MCF 10A (cell line): ENCODE measurements at regions of chr6 and their contacts with region 1.

Region 1: DNA sequence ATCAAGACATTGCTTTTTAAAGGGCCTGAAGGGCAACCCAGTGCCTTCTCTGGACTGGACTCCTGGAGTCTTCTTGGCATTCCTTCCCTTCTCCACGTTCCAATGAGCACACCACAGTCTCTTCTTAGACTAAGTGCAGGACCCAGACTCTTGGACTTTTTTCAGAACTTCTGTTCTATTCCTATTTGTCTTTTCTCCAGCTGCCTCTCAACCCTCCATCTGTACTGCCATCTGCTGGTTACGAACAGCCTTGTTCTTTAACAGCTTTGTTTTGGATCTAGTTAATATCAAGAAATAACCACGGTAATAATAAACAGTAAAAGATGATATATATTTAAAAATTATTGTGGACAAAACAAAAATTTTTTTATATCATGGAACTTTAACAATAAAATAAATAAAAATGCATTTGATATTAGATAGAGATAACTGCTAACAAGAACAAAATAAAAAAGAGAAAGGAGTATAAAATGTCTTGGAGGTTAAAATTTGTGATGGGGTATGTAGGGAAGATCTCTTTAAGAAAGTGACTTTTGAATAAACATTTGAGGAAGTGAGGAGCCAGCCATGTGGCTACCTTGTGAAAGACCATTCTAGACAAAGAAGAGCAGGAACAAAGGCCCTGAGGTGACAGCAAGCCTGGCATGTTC is 105.1 kb upstream of the HCRTR2 start:
- DNase-seq: peak; percentile 63
- H3K4me3 Mint-ChIP-seq: no peak overlapping the region
- H3K27ac Mint-ChIP-seq: no peak overlapping the region
- H3K4me1 Mint-ChIP-seq: no peaks in the 10 kb centered on the region
- H3K27me3 Mint-ChIP-seq: no peaks in the 10 kb centered on the region
- CTCF ChIP-seq: peak; percentile 65

Region 2: DNA sequence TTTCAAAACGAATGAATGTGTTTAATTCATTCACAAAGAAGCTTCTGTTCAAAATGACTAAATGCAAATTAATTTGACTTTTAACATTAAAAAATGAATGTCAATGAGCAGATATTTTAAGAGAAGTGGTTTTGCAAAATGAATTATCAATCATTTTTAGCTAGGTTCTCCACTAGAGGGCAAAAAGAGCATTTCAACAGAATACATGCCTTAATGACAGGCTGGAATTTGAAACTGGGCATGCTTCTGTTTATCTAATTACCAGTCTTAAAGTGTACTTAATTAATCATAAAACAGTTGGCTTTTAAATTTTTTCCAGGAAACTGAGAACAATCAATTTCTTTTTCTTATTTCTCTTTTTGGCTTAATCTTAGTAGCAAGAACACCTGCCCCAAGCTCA is 824.8 kb before region 1 on chr6:
- CTCF ChIA-PET with region 1: interaction called, 8 read pairs
- POLR2A ChIA-PET with region 1: no interaction called
- intact Hi-C with region 1: loop called (anchors 1 kb)
- DNase-seq: peak; percentile 40
- H3K4me3 Mint-ChIP-seq: no peak overlapping the region
- H3K27ac Mint-ChIP-seq: no peak overlapping the region
- H3K4me1 Mint-ChIP-seq: no peaks in the 10 kb centered on the region
- H3K27me3 Mint-ChIP-seq: no peaks in the 10 kb centered on the region
- CTCF ChIP-seq: peak; percentile 60

Region 3: DNA sequence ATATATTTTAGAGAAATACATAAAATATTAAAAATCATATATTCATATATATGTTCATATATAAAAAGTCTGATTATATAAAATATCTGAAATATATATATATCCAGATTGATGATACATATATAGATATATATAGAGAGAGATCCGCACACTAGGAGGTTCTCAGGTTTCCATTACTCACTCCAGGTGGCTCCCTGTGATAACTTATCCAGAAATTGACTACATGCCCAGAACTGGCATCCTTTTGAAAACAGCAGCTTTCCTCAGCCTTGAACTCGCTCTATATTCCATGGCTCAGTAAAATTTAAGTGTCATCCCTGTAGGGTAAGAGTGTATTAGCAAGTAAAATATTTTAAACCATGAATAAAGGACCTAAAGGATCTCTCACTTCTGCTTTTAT is 554.2 kb before region 1 on chr6:
- CTCF ChIA-PET with region 1: interaction called, 3 read pairs
- POLR2A ChIA-PET with region 1: no interaction called
- intact Hi-C with region 1: loop called (anchors 1 kb)
- DNase-seq: peak; percentile 45
- H3K4me3 Mint-ChIP-seq: no peak overlapping the region
- H3K27ac Mint-ChIP-seq: no peak overlapping the region
- H3K4me1 Mint-ChIP-seq: peaks cover 9% of the 10 kb centered on the region
- H3K27me3 Mint-ChIP-seq: no peaks in the 10 kb centered on the region
- CTCF ChIP-seq: no peak

Region 4: DNA sequence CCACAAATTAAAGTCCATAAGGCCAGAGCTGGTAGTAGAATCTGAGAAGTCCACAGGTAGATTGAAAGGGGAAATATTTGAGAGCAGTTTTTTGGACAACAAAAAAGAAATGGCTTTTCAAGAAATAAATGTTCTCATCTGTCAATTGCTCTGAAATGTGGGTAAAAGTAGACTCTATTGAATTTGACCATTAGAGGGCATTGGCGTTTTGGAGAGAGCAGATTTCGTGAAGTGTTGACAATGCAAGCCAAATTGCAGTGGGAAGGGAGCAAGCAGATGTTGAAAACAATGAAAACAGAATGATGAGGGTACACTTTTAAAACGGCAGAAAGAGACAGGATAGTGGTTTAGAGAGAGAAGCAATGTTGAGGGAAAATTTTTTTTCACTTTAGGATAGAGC is 371.8 kb before region 1 on chr6:
- CTCF ChIA-PET with region 1: interaction called, 19 read pairs
- POLR2A ChIA-PET with region 1: interaction called, 3 read pairs
- intact Hi-C with region 1: loop called (anchors 1 kb)
- DNase-seq: peak; percentile 32
- H3K4me3 Mint-ChIP-seq: no peak overlapping the region
- H3K27ac Mint-ChIP-seq: peak overlapping the region; percentile 6
- H3K4me1 Mint-ChIP-seq: peaks cover 10% of the 10 kb centered on the region
- H3K27me3 Mint-ChIP-seq: no peaks in the 10 kb centered on the region
- CTCF ChIP-seq: peak; percentile 31

Region 5: DNA sequence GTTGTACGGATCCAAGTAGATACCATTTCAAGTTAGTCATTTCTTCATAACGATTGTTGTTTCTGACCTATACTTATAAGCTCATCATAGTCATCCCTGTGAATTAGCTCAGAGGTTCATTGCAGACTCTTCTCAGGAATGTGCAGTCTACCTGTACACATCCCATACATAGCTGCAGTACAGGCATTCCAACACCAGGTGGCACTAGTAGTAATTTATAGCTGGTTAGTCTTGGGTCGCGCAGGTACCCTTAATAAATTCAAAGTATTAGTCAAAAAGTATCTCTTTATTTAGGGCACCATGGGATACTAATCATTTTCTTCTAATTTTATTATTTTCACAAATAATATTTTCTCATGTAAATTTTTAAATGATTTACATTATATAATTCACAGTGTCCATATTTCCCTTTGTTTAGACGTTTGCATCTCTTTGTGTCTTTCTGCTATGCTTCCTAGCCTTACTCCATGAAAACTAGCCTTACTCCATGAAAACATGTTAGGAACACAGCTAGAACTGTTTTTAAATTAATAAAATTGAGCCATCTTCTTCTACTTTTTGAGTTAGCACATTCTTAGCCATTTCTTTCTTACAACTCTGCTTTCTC is 351.3 kb before region 1 on chr6:
- CTCF ChIA-PET with region 1: interaction called, 24 read pairs
- POLR2A ChIA-PET with region 1: interaction called, 7 read pairs
- intact Hi-C with region 1: loop called (anchors 1 kb)
- DNase-seq: peak; percentile 80
- H3K4me3 Mint-ChIP-seq: no peak overlapping the region
- H3K27ac Mint-ChIP-seq: no peak overlapping the region
- H3K4me1 Mint-ChIP-seq: peaks cover 16% of the 10 kb centered on the region
- H3K27me3 Mint-ChIP-seq: no peaks in the 10 kb centered on the region
- CTCF ChIP-seq: peak; percentile 77

Region 6: DNA sequence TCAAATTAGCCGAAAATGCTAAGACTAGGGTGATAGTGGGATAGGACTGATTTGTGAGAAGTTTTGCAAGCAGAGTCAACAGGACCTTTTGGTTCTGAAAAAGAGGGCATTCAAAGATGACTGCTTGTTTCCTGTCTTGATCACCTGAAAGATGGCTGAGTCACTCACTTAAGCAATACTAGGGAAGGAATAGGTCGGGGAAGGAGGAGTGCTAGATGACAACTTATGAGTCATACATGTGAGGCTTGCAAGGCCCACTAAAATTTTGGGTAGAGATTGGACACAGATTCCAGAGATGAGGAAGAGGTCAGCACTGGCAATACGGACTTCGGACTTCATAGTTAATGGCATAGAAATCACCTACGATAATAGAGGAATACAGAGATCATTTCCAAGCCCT is 133.5 kb before region 1 on chr6:
- CTCF ChIA-PET with region 1: no interaction called
- POLR2A ChIA-PET with region 1: no interaction called
- intact Hi-C with region 1: loop called (anchors 5 kb)
- DNase-seq: peak; percentile 96
- H3K4me3 Mint-ChIP-seq: no peak overlapping the region
- H3K27ac Mint-ChIP-seq: no peak overlapping the region
- H3K4me1 Mint-ChIP-seq: no peaks in the 10 kb centered on the region
- H3K27me3 Mint-ChIP-seq: no peaks in the 10 kb centered on the region
- CTCF ChIP-seq: no peak

Region 7: DNA sequence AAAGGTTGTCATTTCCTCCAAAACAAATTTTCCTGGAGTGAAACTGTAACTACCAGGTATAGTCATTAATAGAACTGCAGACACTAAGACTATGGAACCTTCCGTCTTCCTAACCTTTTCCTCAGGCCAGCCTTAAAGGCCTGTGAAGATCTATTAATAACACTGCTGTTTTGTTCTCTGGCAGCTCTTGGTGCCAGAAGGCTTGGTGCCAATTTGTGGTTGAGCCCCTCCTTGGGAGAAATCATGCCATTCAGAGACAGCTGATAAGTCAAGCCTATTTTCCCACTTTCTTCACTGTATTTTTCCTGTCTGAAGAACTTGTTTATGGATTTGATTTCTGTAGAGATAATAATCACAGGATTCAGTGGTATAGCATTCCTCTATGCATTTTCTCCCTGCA is 169.8 kb after region 1 on chr6:
- CTCF ChIA-PET with region 1: no interaction called
- POLR2A ChIA-PET with region 1: no interaction called
- intact Hi-C with region 1: loop called (anchors 1 kb)
- DNase-seq: peak; percentile 37
- H3K4me3 Mint-ChIP-seq: no peak overlapping the region
- H3K27ac Mint-ChIP-seq: no peak overlapping the region
- H3K4me1 Mint-ChIP-seq: peaks cover 10% of the 10 kb centered on the region
- H3K27me3 Mint-ChIP-seq: no peaks in the 10 kb centered on the region
- CTCF ChIP-seq: no peak